HepG2 (cell line): ENCODE measurements at regions of chr2 and their contacts with region 1.

Region 1: DNA sequence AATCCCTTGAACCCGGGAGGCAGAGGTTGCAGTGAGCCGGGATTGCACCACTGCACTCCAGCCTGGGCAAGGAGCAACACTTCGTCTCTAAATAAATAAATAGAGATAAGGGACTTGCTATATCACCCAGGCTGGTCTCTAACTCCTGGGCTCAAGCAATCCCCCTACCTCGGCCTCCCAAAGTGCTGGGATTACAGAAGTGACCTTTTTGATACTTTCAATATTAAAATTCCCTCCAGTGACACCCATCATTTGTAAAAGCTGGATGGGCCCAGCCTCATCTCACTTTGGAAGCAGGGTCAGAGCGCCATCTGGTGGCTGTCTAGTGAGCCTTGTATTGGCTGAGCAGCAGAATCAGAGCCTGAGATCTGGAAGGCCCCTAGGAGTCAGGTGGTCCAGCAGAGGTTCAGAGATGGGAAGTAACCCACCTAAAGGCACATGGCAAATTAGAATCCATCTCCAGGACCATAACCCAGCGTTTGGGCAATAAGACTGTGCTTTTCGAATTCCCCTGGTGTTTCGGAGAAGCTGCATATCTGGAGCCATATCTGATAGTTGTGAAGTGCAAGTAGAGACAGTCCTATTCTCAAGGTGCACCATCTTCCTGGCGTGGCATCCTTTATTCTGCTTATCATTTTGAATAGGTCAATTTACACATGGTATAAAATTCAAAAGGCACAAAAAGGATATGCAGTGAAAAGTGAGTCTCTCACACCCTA is 18.3 kb upstream of the SLC35F6 start:
- DNase-seq: peak; percentile 79
- ATAC-seq: peak; percentile 91
- H3K4me3 ChIP-seq: no peak overlapping the region
- H3K27ac ChIP-seq: no peak overlapping the region
- H3K4me1 ChIP-seq: peaks cover 23% of the 10 kb centered on the region
- H3K27me3 ChIP-seq: peaks cover 12 to 47% of the 10 kb centered on the region in 2 experiments; a peak in 4 of 5 replicates
- CTCF ChIP-seq: peak; percentile 95
- EP300 ChIP-seq: no peak
- POLR2A ChIP-seq: no peak
- RAD21 ChIP-seq: peak; percentile 93

Region 2: GRCh38 chr2:26605195-26605998 is 140.4 kb before region 1 on chr2:
- CTCF ChIA-PET with region 1: interaction called, 118 read pairs
- POLR2A ChIA-PET with region 1: no interaction called
- in situ Hi-C with region 1: loop called (anchors 5 kb)
- intact Hi-C with region 1: loop called (anchors 1 kb)
- DNase-seq: peak; percentile 60
- ATAC-seq: peak; percentile 72
- H3K4me3 ChIP-seq: no peak overlapping the region
- H3K27ac ChIP-seq: no peak overlapping the region
- H3K4me1 ChIP-seq: peaks cover 13% of the 10 kb centered on the region
- H3K27me3 ChIP-seq: peaks cover 0 to 21% of the 10 kb centered on the region in 2 experiments; a peak in 3 of 5 replicates
- CTCF ChIP-seq: peak; percentile 98
- EP300 ChIP-seq: no peak
- POLR2A ChIP-seq: no peak
- RAD21 ChIP-seq: peak; percentile 91

Region 3: GRCh38 chr2:26612522-26613240 is 133.1 kb before region 1 on chr2:
- CTCF ChIA-PET with region 1: interaction called, 118 read pairs
- POLR2A ChIA-PET with region 1: no interaction called
- in situ Hi-C with region 1: loop called (anchors 5 kb)
- intact Hi-C with region 1: no loop called
- DNase-seq: no peak
- ATAC-seq: no peak
- H3K4me3 ChIP-seq: no peak overlapping the region
- H3K27ac ChIP-seq: no peak overlapping the region
- H3K4me1 ChIP-seq: peaks cover 34% of the 10 kb centered on the region
- H3K27me3 ChIP-seq: peaks cover 2 to 67% of the 10 kb centered on the region in 2 experiments
- CTCF ChIP-seq: no peak
- EP300 ChIP-seq: no peak
- POLR2A ChIP-seq: no peak
- RAD21 ChIP-seq: no peak

Region 4: GRCh38 chr2:26892922-26893524 is 147.3 kb after region 1 on chr2:
- CTCF ChIA-PET with region 1: no interaction called
- POLR2A ChIA-PET with region 1: no interaction called
- in situ Hi-C with region 1: no loop called
- intact Hi-C with region 1: no loop called
- DNase-seq: no peak
- ATAC-seq: peak; percentile 37; the same call in 1 of the 3 replicates
- H3K4me3 ChIP-seq: no peak overlapping the region
- H3K27ac ChIP-seq: no peak overlapping the region
- H3K4me1 ChIP-seq: peaks cover 15% of the 10 kb centered on the region; the same call in 1 of the 2 replicates
- H3K27me3 ChIP-seq: peaks cover 5 to 30% of the 10 kb centered on the region in 2 experiments; a peak in 4 of 5 replicates
- CTCF ChIP-seq: no peak
- EP300 ChIP-seq: no peak
- POLR2A ChIP-seq: no peak
- RAD21 ChIP-seq: no peak